CD4-positive, alpha-beta memory T cell (primary cell): ENCODE measurements at regions of chr6 and their contacts with region 1.

Region 1: DNA sequence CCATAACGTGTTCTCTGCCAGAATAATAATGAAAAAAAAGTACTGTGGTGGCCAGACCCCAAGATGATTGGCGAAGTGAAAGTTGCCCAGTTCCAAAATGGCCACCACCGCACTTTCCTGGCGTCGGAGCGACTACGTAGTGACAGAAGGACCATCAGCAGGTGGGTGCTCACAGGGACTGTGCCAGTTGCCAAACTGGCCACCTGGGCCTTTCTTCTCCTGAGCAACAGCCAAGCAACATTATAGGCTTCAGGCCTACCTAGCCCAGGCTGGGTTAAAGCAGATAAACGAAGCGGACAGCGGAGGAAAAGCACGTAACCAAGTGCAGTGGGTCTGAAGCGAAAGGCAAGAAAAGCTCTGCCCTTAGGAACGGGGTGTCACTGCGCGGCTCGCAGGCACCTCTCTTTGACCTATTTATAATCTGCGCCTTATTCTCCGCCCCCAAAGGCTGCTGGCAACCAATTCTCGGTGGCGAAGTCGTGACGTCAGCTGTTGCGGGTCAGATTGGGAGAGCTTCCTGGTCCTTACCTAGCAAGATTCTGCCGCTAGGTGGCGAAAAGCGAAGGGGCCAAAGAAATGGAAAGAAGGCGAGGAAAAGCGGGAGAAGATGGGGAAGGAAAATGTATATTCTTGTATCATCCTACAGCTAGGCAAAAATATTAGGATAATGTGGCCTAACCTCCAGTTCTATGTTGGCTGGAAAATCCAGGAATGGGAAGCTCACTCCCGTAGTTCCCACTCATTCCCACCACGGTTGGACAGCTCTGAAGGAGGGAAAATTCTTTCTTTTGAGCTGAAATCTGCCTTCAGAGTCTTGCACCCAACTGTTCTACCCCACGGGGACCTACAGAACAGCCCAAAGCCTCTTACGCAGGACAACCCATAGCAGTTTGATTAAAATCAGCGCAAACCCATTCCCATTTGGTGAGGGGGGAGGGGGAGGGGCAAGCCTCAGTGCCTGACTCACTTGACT is 6.9 kb upstream of the MOG start:
- DNase-seq: peak; percentile 97 to 99 (median 98)
- H3K4me3 ChIP-seq: peak overlapping the region; percentile 63 to 73
- H3K4me3 Mint-ChIP-seq: peak overlapping the region; percentile 95 to 99 (median 98)
- H3K27ac ChIP-seq: peak overlapping the region; percentile 85
- H3K27ac Mint-ChIP-seq: peak overlapping the region; percentile 96 to 100 (median 100)
- H3K4me1 ChIP-seq: peaks cover 19% of the 10 kb centered on the region
- H3K4me1 Mint-ChIP-seq: peaks cover 7 to 22% (median 14%) of the 10 kb centered on the region in 4 donors
- H3K27me3 ChIP-seq: no peaks in the 10 kb centered on the region
- H3K27me3 Mint-ChIP-seq: peaks cover 1 to 3% of the 10 kb centered on the region in 2 donors

Region 2: GRCh38 chr6:29608131-29608530 is 41.9 kb before region 1 on chr6:
- CTCF ChIA-PET with region 1: interaction called, 10 read pairs
- POLR2A ChIA-PET with region 1: no interaction called
- intact Hi-C with region 1: no loop called
- DNase-seq: no peak
- H3K4me3 ChIP-seq: no peak overlapping the region
- H3K4me3 Mint-ChIP-seq: no peak overlapping the region
- H3K27ac ChIP-seq: no peak overlapping the region
- H3K27ac Mint-ChIP-seq: peak overlapping the region in 3 of 7 donors; percentile 50 to 82 (median 81)
- H3K4me1 ChIP-seq: no peaks in the 10 kb centered on the region
- H3K4me1 Mint-ChIP-seq: no peaks in the 10 kb centered on the region
- H3K27me3 ChIP-seq: no peaks in the 10 kb centered on the region
- H3K27me3 Mint-ChIP-seq: no peaks in the 10 kb centered on the region

Region 3: GRCh38 chr6:29632789-29633533 is 17.0 kb before region 1 on chr6 and contains the start of gene GABBR1:
- CTCF ChIA-PET with region 1: interaction called, 336 read pairs
- POLR2A ChIA-PET with region 1: interaction called, 44 read pairs
- intact Hi-C with region 1: loop called (anchors 1 kb)
- DNase-seq: peak; percentile 61 to 80 (median 69)
- H3K4me3 ChIP-seq: peak within 1 kb of the TSS in 1 of 2 donors; percentile 59
- H3K4me3 Mint-ChIP-seq: peak within 1 kb of the TSS; percentile 87 to 95 (median 92)
- H3K27ac ChIP-seq: peak within 1 kb of the TSS; percentile 37
- H3K27ac Mint-ChIP-seq: peak within 1 kb of the TSS; percentile 82 to 97 (median 91)
- H3K4me1 ChIP-seq: peaks cover 50% of the 10 kb centered on the region
- H3K4me1 Mint-ChIP-seq: peaks cover 39 to 59% (median 47%) of the 10 kb centered on the region in 4 donors
- H3K27me3 ChIP-seq: no peaks in the 10 kb centered on the region
- H3K27me3 Mint-ChIP-seq: no peaks in the 10 kb centered on the region
- total RNA-seq, gene GABBR1: 58.1 to 58.9 TPM

Region 4: DNA sequence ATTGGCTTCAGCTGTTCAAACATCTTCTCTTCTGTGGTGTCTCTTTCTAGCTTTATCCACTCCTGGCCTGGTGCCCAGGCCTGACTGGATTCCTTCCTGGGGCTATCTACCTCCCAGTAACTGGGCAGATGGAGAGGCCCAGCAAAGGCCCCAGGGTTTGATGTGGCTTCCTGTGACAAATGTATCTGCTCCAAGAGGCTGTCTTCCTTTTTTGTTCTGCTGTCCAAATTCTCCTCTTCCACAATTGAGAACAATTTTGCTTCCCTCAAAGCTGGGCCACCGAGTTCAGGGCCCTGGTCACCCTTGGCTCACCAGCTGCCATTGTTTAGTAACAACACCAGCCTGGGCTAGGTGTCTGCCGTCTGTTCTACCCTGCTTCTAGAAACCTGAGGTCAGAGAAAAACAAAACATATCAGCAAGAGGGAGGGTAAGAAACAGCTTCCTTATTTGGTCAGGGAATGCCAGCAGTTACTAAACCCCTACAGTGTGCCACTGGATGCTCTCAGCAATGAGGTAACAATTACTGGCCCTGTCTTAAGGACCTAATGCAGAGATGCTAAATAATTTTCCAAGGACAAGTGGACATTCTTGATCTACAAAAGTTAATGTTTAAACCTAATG is 27.1 kb after region 1 on chr6:
- CTCF ChIA-PET with region 1: interaction called, 11 read pairs
- POLR2A ChIA-PET with region 1: no interaction called
- intact Hi-C with region 1: no loop called
- DNase-seq: no peak
- H3K4me3 ChIP-seq: no peak overlapping the region
- H3K4me3 Mint-ChIP-seq: no peak overlapping the region
- H3K27ac ChIP-seq: no peak overlapping the region
- H3K27ac Mint-ChIP-seq: peak overlapping the region in 4 of 7 donors; percentile 70 to 87 (median 74)
- H3K4me1 ChIP-seq: peaks cover 6% of the 10 kb centered on the region
- H3K4me1 Mint-ChIP-seq: peaks cover 2 to 27% (median 6%) of the 10 kb centered on the region in 4 donors
- H3K27me3 ChIP-seq: no peaks in the 10 kb centered on the region
- H3K27me3 Mint-ChIP-seq: peaks cover 2 to 8% of the 10 kb centered on the region in 2 donors

Region 5: DNA sequence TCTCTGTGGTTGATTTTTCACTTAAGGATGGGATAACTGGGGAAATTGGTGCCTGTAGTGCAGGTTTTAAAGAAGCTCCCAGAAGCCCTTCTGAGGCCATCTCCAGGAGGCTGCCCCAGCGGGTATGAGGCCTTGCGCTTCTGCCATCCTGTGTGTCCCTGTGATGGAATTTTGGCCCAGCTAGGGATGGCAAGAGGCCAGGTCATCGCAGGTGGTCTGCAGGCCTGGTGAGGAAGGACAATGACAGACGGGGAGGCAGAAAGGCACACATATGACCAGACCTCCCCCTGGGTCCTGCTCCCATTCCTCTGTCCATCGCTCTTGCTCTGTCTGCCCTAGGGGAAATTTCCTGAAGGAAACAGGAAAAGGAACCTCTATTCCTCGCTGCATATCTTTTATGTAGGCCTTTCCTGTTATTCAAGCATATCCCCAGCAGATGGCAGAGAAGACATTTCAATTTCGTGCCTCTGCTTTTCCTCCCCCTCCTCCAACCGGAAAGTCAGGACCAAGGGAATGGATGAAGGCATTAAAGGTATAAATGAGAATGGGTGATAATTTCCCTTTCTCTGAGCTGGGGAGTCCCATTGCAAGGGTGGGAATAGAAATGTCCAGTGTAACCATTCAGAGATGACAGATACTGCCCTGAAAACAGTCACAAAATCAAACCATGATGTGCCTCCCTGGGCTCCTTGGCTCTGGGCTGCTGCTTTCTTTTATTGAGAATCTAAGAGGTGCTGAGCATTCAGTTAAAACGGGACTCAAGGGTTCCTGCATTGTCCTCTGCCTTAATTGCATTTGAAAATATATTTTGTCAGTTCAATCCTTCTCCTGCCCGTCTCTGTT is 55.6 kb after region 1 on chr6:
- CTCF ChIA-PET with region 1: interaction called, 16 read pairs
- POLR2A ChIA-PET with region 1: interaction called, 7 read pairs
- intact Hi-C with region 1: no loop called
- DNase-seq: peak in 2 of 5 donors; percentile 48 to 51
- H3K4me3 ChIP-seq: no peak overlapping the region
- H3K4me3 Mint-ChIP-seq: peak overlapping the region in 4 of 8 donors; percentile 33 to 64 (median 44)
- H3K27ac ChIP-seq: no peak overlapping the region
- H3K27ac Mint-ChIP-seq: peak overlapping the region; percentile 63 to 90 (median 83)
- H3K4me1 ChIP-seq: peaks cover 54% of the 10 kb centered on the region
- H3K4me1 Mint-ChIP-seq: peaks cover 38 to 58% (median 51%) of the 10 kb centered on the region in 4 donors
- H3K27me3 ChIP-seq: no peaks in the 10 kb centered on the region
- H3K27me3 Mint-ChIP-seq: peaks cover 6 to 15% of the 10 kb centered on the region in 2 donors

Region 6: GRCh38 chr6:29752451-29753308 is 102.7 kb after region 1 on chr6:
- CTCF ChIA-PET with region 1: interaction called, 11 read pairs
- POLR2A ChIA-PET with region 1: interaction called, 5 read pairs
- intact Hi-C with region 1: loop called (anchors 1 kb)
- DNase-seq: peak; percentile 77 to 84 (median 81)
- H3K4me3 ChIP-seq: peak overlapping the region; percentile 95 to 97
- H3K4me3 Mint-ChIP-seq: peak overlapping the region; percentile 88 to 98 (median 96)
- H3K27ac ChIP-seq: peak overlapping the region; percentile 71
- H3K27ac Mint-ChIP-seq: peak overlapping the region; percentile 77 to 96 (median 95)
- H3K4me1 ChIP-seq: peaks cover 27% of the 10 kb centered on the region
- H3K4me1 Mint-ChIP-seq: peaks cover 30 to 57% (median 39%) of the 10 kb centered on the region in 4 donors
- H3K27me3 ChIP-seq: no peaks in the 10 kb centered on the region
- H3K27me3 Mint-ChIP-seq: peaks cover 0 to 5% of the 10 kb centered on the region in 2 donors

Region 7: GRCh38 chr6:29834564-29835436 is 184.8 kb after region 1 on chr6:
- CTCF ChIA-PET with region 1: interaction called, 9 read pairs
- POLR2A ChIA-PET with region 1: no interaction called
- intact Hi-C with region 1: loop called (anchors 2 kb)
- DNase-seq: peak in 4 of 5 donors; percentile 41 to 50 (median 44)
- H3K4me3 ChIP-seq: no peak overlapping the region
- H3K4me3 Mint-ChIP-seq: no peak overlapping the region
- H3K27ac ChIP-seq: no peak overlapping the region
- H3K27ac Mint-ChIP-seq: peak overlapping the region in 1 of 7 donors; percentile 19
- H3K4me1 ChIP-seq: no peaks in the 10 kb centered on the region
- H3K4me1 Mint-ChIP-seq: peaks cover 0 to 5% (median under 1%) of the 10 kb centered on the region in 4 donors
- H3K27me3 ChIP-seq: peaks cover 15% of the 10 kb centered on the region
- H3K27me3 Mint-ChIP-seq: peaks cover 35 to 57% of the 10 kb centered on the region in 2 donors